ENCODE measurements at regions of chr1 and their contacts with region 1.

Region 1: GRCh38 chr1:201184307-201185122 is 6.1 kb upstream of the IGFN1 start:
- DNase-seq: peak in 1 of 2 experiments; percentile 51
- H3K4me3 ChIP-seq: no peak overlapping the region
- H3K27ac ChIP-seq: no peak overlapping the region
- H3K4me1 ChIP-seq: peaks cover 0 to 5% (median 0%) of the 10 kb centered on the region in 4 experiments; a peak in 2 of 7 replicates
- H3K27me3 ChIP-seq: no peaks in the 10 kb centered on the region
- CTCF ChIP-seq: peak; percentile 39 to 81 (median 61)
- EP300 ChIP-seq: no peak
- POLR2A ChIP-seq: no peak
- RAD21 ChIP-seq: peak; percentile 52 to 60

Region 2: DNA sequence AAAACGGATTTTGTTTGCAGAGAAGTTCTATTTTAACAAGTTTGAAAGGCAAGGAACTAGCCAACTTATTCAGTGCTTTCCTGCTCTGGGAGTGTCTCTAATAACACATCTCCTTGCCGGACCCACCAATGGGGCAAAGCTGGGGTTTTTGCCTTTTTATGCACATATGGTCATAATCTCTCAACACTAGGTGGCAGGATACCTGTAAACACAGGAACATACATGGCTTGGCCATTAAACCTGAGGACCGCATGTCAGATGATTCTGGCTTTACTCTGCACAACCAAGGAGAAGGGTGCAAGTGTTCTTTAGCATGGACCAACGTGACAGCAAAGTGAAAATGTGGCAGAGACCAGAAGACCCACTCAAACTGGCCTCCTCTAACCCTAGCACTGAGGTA is 35.1 kb before region 1 on chr1:
- CTCF ChIA-PET with region 1: interaction called, 13 read pairs
- POLR2A ChIA-PET with region 1: interaction called, 3 read pairs
- DNase-seq: no peak
- H3K4me3 ChIP-seq: no peak overlapping the region
- H3K27ac ChIP-seq: no peak overlapping the region
- H3K4me1 ChIP-seq: peaks cover 0 to 7% (median 2%) of the 10 kb centered on the region in 4 experiments; a peak in 2 of 7 replicates
- H3K27me3 ChIP-seq: no peaks in the 10 kb centered on the region
- CTCF ChIP-seq: peak in 2 of 3 experiments; percentile 50 to 63; a peak in 2 of 4 replicates
- EP300 ChIP-seq: no peak
- POLR2A ChIP-seq: no peak
- RAD21 ChIP-seq: peak; percentile 28 to 54; a peak in 3 of 4 replicates

Region 3: GRCh38 chr1:201154389-201155165 is 29.9 kb before region 1 on chr1 and contains the start of gene TMEM9:
- CTCF ChIA-PET with region 1: interaction called, 13 read pairs
- POLR2A ChIA-PET with region 1: interaction called, 3 read pairs
- DNase-seq: peak; percentile 92 to 99
- H3K4me3 ChIP-seq: peak within 1 kb of the TSS; percentile 80 to 94 (median 82)
- H3K27ac ChIP-seq: peak within 1 kb of the TSS; percentile 74; the same call in 1 of the 2 replicates
- H3K4me1 ChIP-seq: peaks cover 0 to 13% (median 7%) of the 10 kb centered on the region in 4 experiments; a peak in 6 of 7 replicates
- H3K27me3 ChIP-seq: no peaks in the 10 kb centered on the region; a peak in 1 of 7 replicates
- CTCF ChIP-seq: no peak
- EP300 ChIP-seq: no peak
- POLR2A ChIP-seq: peak; percentile 20 to 67; a peak in 1 of 3 replicates
- RAD21 ChIP-seq: no peak
- total RNA-seq, gene TMEM9: 79.9 and 83.2 TPM in 2 replicates

Region 4: GRCh38 chr1:201170533-201171062 is 13.9 kb before region 1 on chr1:
- CTCF ChIA-PET with region 1: interaction called, 20 read pairs
- POLR2A ChIA-PET with region 1: interaction called, 6 read pairs
- DNase-seq: peak; percentile 60 to 86
- H3K4me3 ChIP-seq: peak overlapping the region; percentile 60 to 76 (median 72)
- H3K27ac ChIP-seq: no peak overlapping the region
- H3K4me1 ChIP-seq: peaks cover 5 to 10% (median 8%) of the 10 kb centered on the region in 4 experiments; a peak in 6 of 7 replicates
- H3K27me3 ChIP-seq: peaks cover 0 to 6% (median 4%) of the 10 kb centered on the region in 4 experiments; a peak in 3 of 7 replicates
- CTCF ChIP-seq: no peak
- EP300 ChIP-seq: no peak
- POLR2A ChIP-seq: no peak
- RAD21 ChIP-seq: no peak

Region 5: DNA sequence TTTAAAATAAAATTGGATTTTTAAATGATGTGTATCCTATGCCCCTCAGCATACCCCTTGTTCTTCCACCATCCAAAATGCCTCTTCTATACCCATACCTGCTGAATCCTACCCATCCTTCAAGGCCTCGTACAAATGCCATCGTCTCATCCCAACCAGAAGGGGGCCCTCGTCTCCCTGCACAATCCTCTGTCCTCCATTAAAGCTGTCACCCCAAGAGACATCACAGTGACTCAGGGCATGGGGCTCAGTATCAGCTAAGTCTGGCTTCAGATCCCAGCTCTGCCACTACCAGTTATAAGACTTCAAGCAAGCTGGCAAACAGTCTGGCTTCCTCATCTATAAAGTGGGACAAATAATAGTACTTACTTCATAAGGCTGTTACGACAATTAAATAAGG is 29.9 kb after region 1 on chr1:
- CTCF ChIA-PET with region 1: interaction called, 11 read pairs
- POLR2A ChIA-PET with region 1: no interaction called
- DNase-seq: no peak
- H3K4me3 ChIP-seq: no peak overlapping the region
- H3K27ac ChIP-seq: no peak overlapping the region
- H3K4me1 ChIP-seq: peaks cover 0 to 3% (median 0%) of the 10 kb centered on the region in 4 experiments; a peak in 1 of 7 replicates
- H3K27me3 ChIP-seq: no peaks in the 10 kb centered on the region
- CTCF ChIP-seq: peak; percentile 65 to 83 (median 82)
- EP300 ChIP-seq: no peak
- POLR2A ChIP-seq: no peak
- RAD21 ChIP-seq: peak; percentile 60 to 68

Region 6: DNA sequence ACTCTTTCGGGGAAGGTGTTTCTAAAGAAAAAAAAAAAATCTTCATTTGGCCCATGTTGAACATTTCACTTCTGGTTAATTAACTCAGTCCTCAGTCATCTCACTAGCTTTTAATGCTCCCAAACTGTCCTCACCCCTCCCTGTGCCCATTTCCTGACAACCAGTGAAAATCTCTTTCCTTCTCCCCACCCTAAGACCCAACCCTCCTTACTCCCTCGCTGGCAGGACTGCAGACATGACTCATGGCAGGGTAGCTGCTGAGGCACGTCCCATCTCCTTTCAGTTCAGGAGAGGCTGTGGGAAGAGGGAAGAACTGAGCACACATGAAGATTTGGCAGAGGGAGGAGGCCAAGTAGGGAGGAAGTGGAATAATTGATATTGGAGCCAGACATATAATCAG is 111.3 kb after region 1 on chr1:
- CTCF ChIA-PET with region 1: no interaction called
- POLR2A ChIA-PET with region 1: no interaction called
- DNase-seq: no peak
- H3K4me3 ChIP-seq: no peak overlapping the region
- H3K27ac ChIP-seq: no peak overlapping the region
- H3K4me1 ChIP-seq: peaks cover 0 to 3% (median 0%) of the 10 kb centered on the region in 4 experiments; a peak in 1 of 7 replicates
- H3K27me3 ChIP-seq: no peaks in the 10 kb centered on the region; a peak in 1 of 7 replicates
- CTCF ChIP-seq: no peak
- EP300 ChIP-seq: no peak
- POLR2A ChIP-seq: no peak
- RAD21 ChIP-seq: no peak

Measured in H1 (cell line).